ENCODE measurements at regions of chr16 and their contacts with region 1.

Region 1: DNA sequence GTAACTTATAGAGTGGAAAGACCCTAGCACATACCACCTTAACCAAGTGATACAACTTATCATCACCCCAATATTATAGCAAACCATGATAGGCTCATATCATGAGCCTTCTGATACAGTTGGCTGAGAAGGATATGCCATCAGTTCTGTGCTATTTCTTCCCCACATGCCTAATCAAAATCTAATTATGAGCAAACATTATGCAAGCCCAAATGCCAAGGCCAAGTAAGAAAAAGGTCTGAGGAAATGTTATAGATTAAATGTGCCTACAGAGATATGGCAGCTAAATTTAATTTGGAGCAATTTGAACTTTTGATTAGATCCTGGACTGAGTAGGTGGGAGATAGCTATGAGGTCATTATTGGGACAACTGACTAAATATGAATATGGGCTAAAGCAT is 225.9 kb upstream of the PMFBP1 start:
- DNase-seq: no peak
- H3K4me3 ChIP-seq: no peak overlapping the region
- H3K27ac ChIP-seq: no peak overlapping the region
- H3K4me1 ChIP-seq: no peaks in the 10 kb centered on the region
- H3K27me3 ChIP-seq: no peaks in the 10 kb centered on the region
- CTCF ChIP-seq: no peak
- EP300 ChIP-seq: no peak
- POLR2A ChIP-seq: no peak

Region 2: DNA sequence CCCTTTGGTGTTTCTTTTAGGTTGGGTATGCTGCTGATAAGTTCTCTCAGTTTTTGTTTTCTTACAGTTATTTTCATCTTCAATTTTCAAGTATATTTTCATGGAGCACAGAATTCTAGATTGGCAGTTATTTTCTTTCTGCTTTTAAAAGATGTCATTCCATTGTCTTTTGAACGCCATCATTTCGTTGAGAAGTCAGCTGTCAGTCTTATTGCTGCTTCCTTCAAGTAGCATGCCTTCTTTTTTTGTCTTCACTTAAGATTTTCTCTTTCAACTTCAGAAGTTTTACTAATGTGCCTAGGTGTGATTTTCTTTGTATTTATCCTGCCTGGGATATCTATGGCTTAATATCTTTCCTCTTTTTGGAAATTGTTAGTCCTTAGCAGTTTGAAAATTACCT is 36.3 kb after region 1 on chr16:
- intact Hi-C with region 1: no loop called
- DNase-seq: no peak
- H3K4me3 ChIP-seq: no peak overlapping the region
- H3K27ac ChIP-seq: no peak overlapping the region
- H3K4me1 ChIP-seq: no peaks in the 10 kb centered on the region
- H3K27me3 ChIP-seq: no peaks in the 10 kb centered on the region
- CTCF ChIP-seq: no peak
- EP300 ChIP-seq: no peak
- POLR2A ChIP-seq: no peak

Region 3: DNA sequence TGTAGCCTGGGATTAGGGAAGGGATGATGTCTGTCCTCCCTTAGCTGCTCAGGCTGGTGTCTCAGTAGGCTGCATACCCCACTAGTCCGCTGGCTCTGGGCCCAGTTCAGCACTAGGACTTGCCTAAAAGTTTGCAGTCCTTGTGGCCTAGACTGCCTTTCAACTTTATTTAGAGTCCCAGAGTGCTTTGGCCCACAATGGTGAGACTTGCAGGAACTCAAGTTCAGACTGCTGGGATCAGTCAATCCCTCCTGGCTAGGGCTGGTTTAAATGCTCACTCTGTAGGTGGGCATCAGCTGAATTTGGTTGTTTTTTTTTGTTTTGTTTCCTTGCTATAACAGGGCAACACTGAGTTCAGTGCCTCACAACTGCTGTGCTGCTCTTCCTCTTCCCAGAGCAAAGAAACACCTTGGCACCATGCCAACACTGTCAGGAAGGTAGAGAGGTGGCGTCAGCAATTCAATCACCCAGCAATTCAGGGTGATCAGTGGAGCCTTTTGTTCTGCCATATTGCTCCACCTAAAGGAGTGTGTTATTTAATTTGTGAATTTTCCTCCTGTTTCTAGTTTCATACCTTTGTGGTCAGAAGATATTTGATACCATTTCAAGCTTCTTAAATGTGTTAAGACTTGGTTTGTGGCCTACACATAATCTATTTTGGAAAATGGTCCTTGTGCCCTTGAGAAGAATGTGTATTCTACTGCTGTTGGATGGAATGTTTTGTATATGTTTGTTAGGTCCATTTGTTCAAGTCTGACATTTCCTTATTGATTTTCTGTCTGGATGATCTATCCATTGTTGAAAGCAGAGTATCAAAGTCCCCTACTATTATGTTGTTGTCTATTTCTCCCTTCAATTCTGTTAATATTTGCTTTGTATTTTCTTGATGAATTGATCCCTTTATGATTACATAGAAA is 58.1 kb after region 1 on chr16:
- intact Hi-C with region 1: loop called (anchors 10 kb)
- DNase-seq: no peak
- H3K4me3 ChIP-seq: no peak overlapping the region
- H3K27ac ChIP-seq: no peak overlapping the region
- H3K4me1 ChIP-seq: no peaks in the 10 kb centered on the region
- H3K27me3 ChIP-seq: no peaks in the 10 kb centered on the region
- CTCF ChIP-seq: no peak
- EP300 ChIP-seq: no peak
- POLR2A ChIP-seq: no peak